OCI-LY7 (cell line): ENCODE measurements at regions of chr2 and their contacts with region 1.

Region 1: DNA sequence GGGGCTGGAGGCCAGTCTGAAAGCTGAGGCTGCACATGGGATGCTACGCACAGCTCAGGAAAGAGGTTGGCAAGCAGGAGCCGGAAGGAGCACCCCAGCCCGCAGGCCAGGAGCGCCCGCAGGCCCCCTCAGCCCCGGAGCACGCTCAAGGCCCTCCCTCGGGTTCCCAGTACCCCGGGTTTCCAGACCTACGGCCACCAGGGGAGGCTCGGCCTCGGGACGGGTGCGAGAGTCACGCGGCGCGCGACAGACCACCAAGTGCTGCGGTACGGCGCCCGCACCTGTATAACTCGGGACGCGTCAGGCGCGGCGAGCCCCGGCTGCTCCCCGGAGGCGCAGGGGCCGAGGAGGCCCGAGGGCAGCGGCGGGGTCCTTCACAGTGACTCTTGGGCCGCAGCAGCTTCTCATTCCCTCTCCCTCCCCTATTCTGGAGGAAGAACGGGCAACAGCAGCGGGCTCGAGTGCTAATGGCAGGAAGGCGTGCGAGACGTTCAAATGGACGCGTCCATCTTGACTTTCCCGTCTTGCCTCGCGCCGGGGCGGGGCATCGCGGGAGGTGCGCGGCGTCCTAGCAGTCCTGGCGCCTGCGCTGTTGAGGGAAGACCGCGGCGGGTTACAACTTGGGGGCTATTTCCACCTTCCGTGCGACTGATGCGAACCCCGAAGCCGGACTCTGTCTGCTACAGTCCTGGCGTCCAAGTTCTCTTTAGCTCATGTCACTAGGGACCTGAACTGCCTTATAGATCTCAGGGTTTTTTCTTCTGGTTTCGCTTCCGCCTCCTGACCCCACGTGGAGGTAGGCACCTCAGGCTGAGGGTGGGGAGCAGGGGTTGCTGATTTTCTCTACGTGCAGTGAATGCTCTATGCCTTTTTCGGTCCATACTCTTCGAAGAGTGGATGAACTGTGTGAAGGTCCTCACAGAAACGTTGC is at the start of gene ANAPC1:
- DNase-seq: peak; percentile 92
- H3K4me3 ChIP-seq: peak within 1 kb of the TSS; percentile 88
- H3K27ac ChIP-seq: peak within 1 kb of the TSS; percentile 87
- H3K4me1 ChIP-seq: peaks cover 14% of the 10 kb centered on the region
- CTCF ChIP-seq: no peak
- total RNA-seq, gene ANAPC1: 103 and 151 TPM in 2 replicates

Region 2: GRCh38 chr2:112048887-112049286 is 165.0 kb after region 1 on chr2:
- CTCF ChIA-PET with region 1: interaction called, 3 read pairs
- POLR2A ChIA-PET with region 1: interaction called, 9 read pairs
- intact Hi-C with region 1: loop called (anchors 1 kb)
- DNase-seq: peak; percentile 61
- H3K4me3 ChIP-seq: no peak overlapping the region
- H3K27ac ChIP-seq: no peak overlapping the region
- H3K4me1 ChIP-seq: peaks cover 6% of the 10 kb centered on the region
- CTCF ChIP-seq: peak; percentile 94

Region 3: DNA sequence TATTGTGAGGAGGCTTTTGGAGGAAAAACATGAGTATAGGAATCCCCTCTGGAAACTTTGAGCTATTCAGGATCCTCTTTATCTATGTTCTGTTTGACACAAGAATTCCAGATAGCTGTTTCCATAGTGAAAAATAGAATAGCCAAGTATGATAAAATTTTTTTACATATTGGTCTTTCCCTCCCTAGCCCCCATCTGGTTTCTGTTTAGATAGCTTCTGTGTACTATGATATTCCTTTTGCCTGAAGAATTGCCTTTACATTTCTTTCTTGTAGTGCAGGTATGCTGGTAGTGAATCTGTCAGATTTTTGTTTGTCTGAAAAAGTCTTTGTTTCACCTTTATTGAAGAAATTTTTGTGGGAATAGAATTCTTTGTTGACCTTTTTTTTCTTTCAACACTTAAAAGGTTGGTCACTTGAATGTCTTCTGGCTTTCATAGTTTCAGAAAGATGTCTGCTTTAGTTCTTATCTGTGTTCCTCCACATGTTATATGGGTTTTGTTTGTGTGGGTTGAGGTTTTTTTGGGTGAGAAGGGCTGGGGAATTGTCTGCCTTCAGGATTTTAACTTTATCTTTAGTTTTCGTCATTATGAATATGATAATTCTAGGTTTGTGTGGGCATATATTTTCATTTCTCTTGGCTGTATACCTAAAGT is 224.4 kb after region 1 on chr2:
- CTCF ChIA-PET with region 1: no interaction called
- POLR2A ChIA-PET with region 1: no interaction called
- intact Hi-C with region 1: no loop called
- DNase-seq: no peak
- H3K4me3 ChIP-seq: no peak overlapping the region
- H3K27ac ChIP-seq: no peak overlapping the region
- H3K4me1 ChIP-seq: no peaks in the 10 kb centered on the region
- CTCF ChIP-seq: no peak

Region 4: GRCh38 chr2:112764071-112765044 is 880.4 kb after region 1 on chr2 and contains the start of gene CKAP2L:
- CTCF ChIA-PET with region 1: no interaction called
- POLR2A ChIA-PET with region 1: no interaction called
- intact Hi-C with region 1: loop called (anchors 5 kb)
- DNase-seq: peak; percentile 99
- H3K4me3 ChIP-seq: peak within 1 kb of the TSS; percentile 82
- H3K27ac ChIP-seq: peak within 1 kb of the TSS; percentile 75
- H3K4me1 ChIP-seq: peaks cover 25% of the 10 kb centered on the region
- CTCF ChIP-seq: no peak; the same call in 1 of the 2 replicates
- total RNA-seq, gene CKAP2L: 28.8 and 31.8 TPM in 2 replicates